ENCODE measurements at regions of chr5 and their contacts with region 1.

Region 1: GRCh38 chr5:158695595-158696330 is 404.0 kb downstream of the EBF1 start:
- DNase-seq: peak; percentile 17
- H3K4me3 ChIP-seq: no peak overlapping the region
- H3K27ac ChIP-seq: no peak overlapping the region
- H3K4me1 ChIP-seq: no peaks in the 10 kb centered on the region
- H3K27me3 ChIP-seq: peaks cover 2% of the 10 kb centered on the region
- CTCF ChIP-seq: peak; percentile 90 to 97

Region 2: GRCh38 chr5:158770506-158770905 is 74.7 kb after region 1 on chr5:
- CTCF ChIA-PET with region 1: no interaction called
- dilution Hi-C with region 1: no loop called
- in situ Hi-C with region 1: no loop called
- intact Hi-C with region 1: loop called (anchors 5 kb)
- DNase-seq: peak; percentile 2
- H3K4me3 ChIP-seq: no peak overlapping the region
- H3K27ac ChIP-seq: no peak overlapping the region
- H3K4me1 ChIP-seq: no peaks in the 10 kb centered on the region
- H3K27me3 ChIP-seq: peaks cover 1% of the 10 kb centered on the region
- CTCF ChIP-seq: peak in 1 of 2 donors; percentile 25

Region 3: GRCh38 chr5:159133041-159133741 is 437.4 kb after region 1 on chr5:
- CTCF ChIA-PET with region 1: no interaction called
- dilution Hi-C with region 1: no loop called
- in situ Hi-C with region 1: no loop called
- intact Hi-C with region 1: loop called (anchors 1 kb)
- DNase-seq: peak; percentile 38
- H3K4me3 ChIP-seq: no peak overlapping the region
- H3K27ac ChIP-seq: no peak overlapping the region
- H3K4me1 ChIP-seq: no peaks in the 10 kb centered on the region
- H3K27me3 ChIP-seq: no peaks in the 10 kb centered on the region
- CTCF ChIP-seq: peak; percentile 62 to 69

Region 4: GRCh38 chr5:159257629-159258283 is 562.0 kb after region 1 on chr5:
- CTCF ChIA-PET with region 1: no interaction called
- dilution Hi-C with region 1: no loop called
- in situ Hi-C with region 1: no loop called
- intact Hi-C with region 1: no loop called
- DNase-seq: no peak
- H3K4me3 ChIP-seq: no peak overlapping the region
- H3K27ac ChIP-seq: no peak overlapping the region
- H3K4me1 ChIP-seq: peaks cover 5% of the 10 kb centered on the region
- H3K27me3 ChIP-seq: no peaks in the 10 kb centered on the region
- CTCF ChIP-seq: no peak

Measured in mammary epithelial cell (primary cell).